Activated naive CD4-positive, alpha-beta T cell treated with anti-CD3 and anti-CD28 coated beads for 36 hours (primary cell): ENCODE measurements at regions of chr3 and their contacts with region 1.

Region 1: DNA sequence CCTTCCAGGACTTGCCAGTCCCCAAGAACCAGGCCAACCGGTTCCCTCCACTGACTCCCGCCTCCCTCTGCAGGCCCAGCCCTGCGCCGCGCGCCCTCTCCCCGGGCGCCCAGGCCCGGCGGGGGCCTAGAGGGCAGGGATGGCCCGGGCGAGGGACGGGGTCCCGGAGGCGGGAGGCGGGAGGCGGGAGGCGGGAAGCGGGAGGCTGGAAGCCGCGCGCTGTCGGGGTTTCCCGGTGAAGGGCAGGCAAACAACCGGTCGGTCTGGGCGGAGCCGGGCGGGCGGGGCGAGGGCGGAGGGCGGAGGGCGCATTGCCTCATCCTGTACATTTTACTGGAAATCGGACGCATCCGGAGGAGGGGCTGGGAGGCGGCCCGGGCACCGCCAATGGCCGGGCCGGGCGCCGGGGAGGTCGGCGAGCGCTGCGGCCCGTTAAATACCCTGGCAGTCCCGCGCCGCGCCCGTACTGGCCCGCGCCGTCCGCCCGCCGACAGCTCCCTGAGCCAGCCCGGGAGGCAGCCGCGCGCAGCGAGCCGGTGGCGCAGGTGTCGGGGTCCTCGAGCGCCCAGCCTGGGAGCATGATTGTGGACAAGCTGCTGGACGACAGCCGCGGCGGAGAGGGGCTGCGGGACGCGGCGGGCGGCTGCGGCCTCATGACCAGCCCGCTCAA is at the start of gene NFKBIZ:
- DNase-seq: peak; percentile 97
- H3K4me3 Mint-ChIP-seq: peak within 1 kb of the TSS; percentile 98
- H3K27ac Mint-ChIP-seq: peak within 1 kb of the TSS; percentile 100
- H3K4me1 Mint-ChIP-seq: peaks cover 39% of the 10 kb centered on the region
- H3K27me3 Mint-ChIP-seq: no peaks in the 10 kb centered on the region
- total RNA-seq, gene NFKBIZ: 79.3 to 85.0 TPM

Region 2: DNA sequence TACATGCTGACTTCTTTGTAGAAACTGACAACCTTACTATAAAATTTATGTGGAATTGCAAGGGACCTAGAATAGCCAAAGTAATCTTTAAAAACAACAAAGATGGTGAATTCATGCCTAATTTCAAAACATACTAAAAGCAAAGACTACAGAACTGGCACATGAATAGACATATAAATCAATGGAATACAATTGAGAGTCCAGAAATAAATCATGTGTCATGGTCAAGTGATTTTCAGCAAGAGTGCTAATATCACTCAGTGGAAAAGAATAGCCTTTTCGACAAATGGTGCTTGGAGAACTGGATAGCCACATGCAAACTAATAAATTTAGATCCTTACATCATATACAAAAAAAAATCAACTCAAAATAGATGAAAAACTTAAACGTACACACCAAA is 537.5 kb before region 1 on chr3:
- CTCF ChIA-PET with region 1: no interaction called
- intact Hi-C with region 1: no loop called
- DNase-seq: no peak
- H3K4me3 Mint-ChIP-seq: no peak overlapping the region
- H3K27ac Mint-ChIP-seq: no peak overlapping the region
- H3K4me1 Mint-ChIP-seq: no peaks in the 10 kb centered on the region
- H3K27me3 Mint-ChIP-seq: no peaks in the 10 kb centered on the region

Region 3: DNA sequence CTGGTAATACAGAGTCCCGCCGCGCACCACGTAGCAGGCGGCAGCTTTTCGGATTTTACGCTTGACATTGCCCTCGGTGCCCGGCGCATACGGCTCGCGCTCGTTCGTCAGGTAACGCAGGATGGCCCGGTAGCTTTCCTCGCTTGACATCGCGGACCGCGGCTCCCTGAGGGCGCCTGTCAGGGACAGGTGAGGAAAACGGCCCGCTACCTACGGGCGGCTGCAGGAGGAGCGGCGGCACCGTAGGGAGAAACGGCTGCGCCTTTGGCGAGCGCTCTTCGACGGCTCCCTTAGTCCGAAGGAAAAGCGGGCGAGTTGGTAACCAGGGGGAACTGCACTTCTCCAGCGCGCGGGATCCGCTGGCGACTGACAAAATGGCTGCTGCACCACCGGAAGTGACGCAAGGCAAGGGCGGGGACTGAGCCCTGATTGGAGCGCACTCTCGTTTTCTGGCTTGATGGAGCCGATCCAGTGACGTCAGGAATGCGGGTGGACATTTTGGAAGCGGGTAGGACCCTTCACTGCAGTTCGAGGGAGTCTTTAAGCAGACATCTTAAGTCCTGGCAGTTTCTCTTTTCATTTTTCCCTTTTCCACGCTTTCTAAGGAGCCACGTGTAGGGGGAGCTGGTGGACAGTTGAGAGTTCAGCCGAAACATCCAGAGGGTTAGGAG is 172.3 kb before region 1 on chr3 and contains the start of gene ZBTB11:
- CTCF ChIA-PET with region 1: no interaction called
- intact Hi-C with region 1: loop called (anchors 1 kb)
- DNase-seq: peak; percentile 100
- H3K4me3 Mint-ChIP-seq: peak within 1 kb of the TSS; percentile 87
- H3K27ac Mint-ChIP-seq: peak within 1 kb of the TSS; percentile 95
- H3K4me1 Mint-ChIP-seq: peaks cover 54% of the 10 kb centered on the region
- H3K27me3 Mint-ChIP-seq: no peaks in the 10 kb centered on the region
- total RNA-seq, gene ZBTB11: 31.2 to 31.7 TPM

Region 4: DNA sequence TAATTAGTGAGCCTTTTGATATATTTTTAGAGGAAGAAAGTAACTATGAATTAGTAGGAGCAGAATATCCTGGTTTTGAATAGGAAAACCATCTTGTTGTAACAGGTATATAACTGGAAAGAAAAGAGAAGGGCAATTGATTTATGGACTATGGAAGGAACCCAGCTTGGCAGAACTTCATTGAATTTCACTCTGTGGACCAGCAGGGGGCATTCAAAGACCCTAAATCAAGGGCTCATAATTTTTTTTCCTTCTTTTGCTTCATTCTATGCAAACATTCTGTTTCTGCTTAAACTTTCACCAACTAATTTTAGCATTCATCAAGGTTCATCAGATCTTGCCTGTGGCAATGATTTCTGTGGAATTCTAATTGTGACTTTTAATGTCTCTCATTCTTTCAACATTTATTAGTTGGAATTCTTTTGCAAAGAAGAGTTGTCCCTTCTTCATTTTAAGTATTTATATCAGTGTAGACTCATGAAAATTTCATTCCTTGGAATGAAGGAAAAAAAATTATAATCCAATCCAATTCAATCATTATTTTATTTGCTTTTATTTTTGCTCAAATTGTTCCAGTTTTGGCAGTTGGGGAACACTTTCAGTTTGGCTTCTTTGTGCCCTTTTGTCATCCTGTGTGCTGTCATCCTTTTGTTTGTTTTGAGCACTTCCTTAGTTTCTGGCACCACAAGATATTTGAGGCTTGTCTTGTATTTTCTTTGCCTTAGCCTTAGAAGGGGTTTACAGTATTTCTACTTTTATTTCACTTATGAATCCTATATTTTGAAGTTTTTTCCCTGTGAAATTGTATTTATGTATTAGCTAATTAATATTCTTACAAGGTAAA is 39.8 kb before region 1 on chr3:
- CTCF ChIA-PET with region 1: interaction called, 9 read pairs
- intact Hi-C with region 1: loop called (anchors 1 kb)
- DNase-seq: peak; percentile 49
- H3K4me3 Mint-ChIP-seq: no peak overlapping the region
- H3K27ac Mint-ChIP-seq: no peak overlapping the region
- H3K4me1 Mint-ChIP-seq: peaks cover 46% of the 10 kb centered on the region
- H3K27me3 Mint-ChIP-seq: no peaks in the 10 kb centered on the region

Region 5: GRCh38 chr3:101890716-101891115 is 41.5 kb after region 1 on chr3:
- CTCF ChIA-PET with region 1: interaction called, 3 read pairs
- intact Hi-C with region 1: loop called (anchors 1 kb)
- DNase-seq: peak; percentile 43
- H3K4me3 Mint-ChIP-seq: no peak overlapping the region
- H3K27ac Mint-ChIP-seq: no peak overlapping the region
- H3K4me1 Mint-ChIP-seq: peaks cover 12% of the 10 kb centered on the region
- H3K27me3 Mint-ChIP-seq: no peaks in the 10 kb centered on the region

Region 6: DNA sequence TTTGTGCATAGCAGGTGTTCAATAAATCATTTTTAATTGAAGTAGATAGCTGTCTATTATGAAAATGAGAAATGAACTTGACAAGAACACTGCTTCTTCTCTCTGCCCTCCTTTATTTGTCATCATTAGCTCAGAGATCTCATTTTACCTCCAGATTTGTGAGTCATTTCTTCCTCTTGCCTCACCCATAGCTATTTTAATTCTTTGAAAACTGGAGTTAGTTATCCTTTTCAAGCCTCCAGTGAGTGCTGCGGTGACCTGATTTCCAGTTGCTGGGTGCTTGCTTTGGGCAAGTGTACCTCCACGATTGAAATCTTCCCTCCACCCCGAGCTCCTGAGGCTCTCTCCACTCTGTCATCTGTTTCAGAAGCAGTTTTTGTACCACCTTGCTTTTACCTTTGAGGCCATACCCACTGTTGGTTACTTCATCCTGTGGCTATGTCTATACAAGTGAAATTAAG is 114.7 kb after region 1 on chr3:
- CTCF ChIA-PET with region 1: no interaction called
- intact Hi-C with region 1: loop called (anchors 1 kb)
- DNase-seq: peak; percentile 77
- H3K4me3 Mint-ChIP-seq: peak overlapping the region; percentile 27
- H3K27ac Mint-ChIP-seq: peak overlapping the region; percentile 80
- H3K4me1 Mint-ChIP-seq: peaks cover 31% of the 10 kb centered on the region
- H3K27me3 Mint-ChIP-seq: no peaks in the 10 kb centered on the region

Region 7: GRCh38 chr3:102102394-102102793 is 253.2 kb after region 1 on chr3:
- CTCF ChIA-PET with region 1: no interaction called
- intact Hi-C with region 1: no loop called
- DNase-seq: no peak
- H3K4me3 Mint-ChIP-seq: no peak overlapping the region
- H3K27ac Mint-ChIP-seq: no peak overlapping the region
- H3K4me1 Mint-ChIP-seq: peaks cover 16% of the 10 kb centered on the region
- H3K27me3 Mint-ChIP-seq: no peaks in the 10 kb centered on the region

Region 8: DNA sequence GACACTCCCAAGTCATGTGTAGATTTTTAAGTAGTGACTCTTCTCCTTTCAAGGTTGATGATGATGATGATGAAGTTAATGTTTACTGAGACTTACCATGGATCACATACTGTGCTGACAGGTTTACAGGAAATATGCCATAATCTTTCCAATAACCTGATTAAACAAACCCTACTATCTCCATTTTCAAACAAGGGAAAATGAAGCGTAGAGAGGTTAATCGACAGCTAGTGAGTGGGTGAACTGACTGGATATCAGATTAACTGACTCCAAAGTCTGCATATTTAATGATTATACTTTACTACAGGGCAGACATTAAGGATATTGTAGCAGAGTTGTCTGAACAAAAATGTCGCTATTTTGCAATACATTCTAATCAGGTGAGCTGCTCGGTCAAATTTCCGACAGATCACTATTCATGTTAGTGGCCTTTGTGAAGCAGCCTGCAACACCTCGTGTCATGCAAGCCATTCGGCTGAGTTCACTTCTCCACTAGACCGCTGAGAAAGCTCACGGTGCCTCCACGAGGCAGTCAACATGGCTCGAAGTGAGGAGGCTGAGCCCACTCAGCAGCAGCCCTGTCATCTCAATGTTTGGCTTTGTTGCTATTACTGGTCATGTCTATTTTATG is 264.3 kb after region 1 on chr3:
- CTCF ChIA-PET with region 1: no interaction called
- intact Hi-C with region 1: loop called (anchors 1 kb)
- DNase-seq: peak; percentile 24
- H3K4me3 Mint-ChIP-seq: no peak overlapping the region
- H3K27ac Mint-ChIP-seq: peak overlapping the region; percentile 81
- H3K4me1 Mint-ChIP-seq: peaks cover 30% of the 10 kb centered on the region
- H3K27me3 Mint-ChIP-seq: no peaks in the 10 kb centered on the region